CD4-positive, alpha-beta memory T cell (primary cell): ENCODE measurements at regions of chr6 and their contacts with region 1.

Region 1: DNA sequence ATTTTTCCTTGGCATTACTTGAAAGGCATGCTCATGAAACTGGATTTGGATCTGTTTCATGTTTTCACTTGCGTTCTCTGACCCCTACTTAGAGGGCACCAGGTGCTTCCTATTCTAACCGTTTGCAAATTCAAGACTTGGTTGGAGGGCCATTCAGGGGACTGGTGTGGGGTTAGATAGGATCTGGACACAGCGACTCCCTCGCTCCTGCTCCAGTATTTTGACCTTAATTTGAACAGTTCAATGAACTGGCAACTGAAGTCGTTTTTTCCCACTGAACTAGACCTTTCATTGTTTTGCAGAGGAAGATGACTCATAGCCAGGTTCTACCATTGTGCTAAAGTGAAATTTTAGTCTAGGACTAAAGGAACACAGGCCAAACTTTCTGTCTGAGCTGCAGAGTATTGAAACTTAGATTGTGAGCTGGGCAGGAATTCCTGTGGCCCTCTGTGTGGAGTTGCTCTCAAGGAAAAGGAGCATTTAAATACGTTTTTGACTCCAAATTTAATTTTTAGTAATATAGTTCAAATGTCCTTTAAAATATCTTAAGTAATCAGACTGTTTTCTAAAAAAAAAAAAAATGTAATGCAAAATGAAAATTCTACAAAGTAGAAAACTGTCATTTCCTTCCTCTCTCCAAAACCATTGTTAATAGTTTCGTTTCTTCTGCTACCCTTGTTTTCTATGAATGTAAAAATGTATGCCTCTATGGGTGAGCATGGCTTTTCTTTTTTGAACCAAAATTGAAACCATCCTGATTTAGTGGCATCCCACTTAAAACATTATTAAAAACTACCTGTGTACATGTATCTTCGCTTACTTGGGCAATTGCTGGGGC is 64.8 kb downstream of the UTRN start:
- DNase-seq: peak; percentile 42 to 49 (median 44)
- H3K4me3 ChIP-seq: peak overlapping the region; percentile 6 to 18
- H3K4me3 Mint-ChIP-seq: peak overlapping the region; percentile 75 to 90 (median 79)
- H3K27ac ChIP-seq: peak overlapping the region; percentile 61
- H3K27ac Mint-ChIP-seq: peak overlapping the region; percentile 81 to 96 (median 93)
- H3K4me1 ChIP-seq: peaks cover 98% of the 10 kb centered on the region
- H3K4me1 Mint-ChIP-seq: peaks cover 59 to 93% (median 80%) of the 10 kb centered on the region in 4 donors
- H3K27me3 ChIP-seq: no peaks in the 10 kb centered on the region
- H3K27me3 Mint-ChIP-seq: no peaks in the 10 kb centered on the region

Region 2: GRCh38 chr6:144284783-144285547 is 64.9 kb before region 1 on chr6 and contains the start of gene UTRN:
- CTCF ChIA-PET with region 1: interaction called, 4 read pairs
- POLR2A ChIA-PET with region 1: interaction called, 10 read pairs
- intact Hi-C with region 1: loop called (anchors 2 kb)
- DNase-seq: peak; percentile 18 to 40 (median 30)
- H3K4me3 ChIP-seq: peak within 1 kb of the TSS; percentile 65 to 89
- H3K4me3 Mint-ChIP-seq: peak within 1 kb of the TSS; percentile 88 to 98 (median 96)
- H3K27ac ChIP-seq: peak within 1 kb of the TSS; percentile 10
- H3K27ac Mint-ChIP-seq: peak within 1 kb of the TSS; percentile 53 to 86 (median 68)
- H3K4me1 ChIP-seq: peaks cover 20% of the 10 kb centered on the region
- H3K4me1 Mint-ChIP-seq: peaks cover 9 to 23% (median 18%) of the 10 kb centered on the region in 4 donors
- H3K27me3 ChIP-seq: no peaks in the 10 kb centered on the region
- H3K27me3 Mint-ChIP-seq: no peaks in the 10 kb centered on the region
- total RNA-seq, gene UTRN: 219 to 227 TPM

Region 3: GRCh38 chr6:144334131-144334708 is 15.7 kb before region 1 on chr6:
- CTCF ChIA-PET with region 1: no interaction called
- POLR2A ChIA-PET with region 1: interaction called, 49 read pairs
- intact Hi-C with region 1: loop called (anchors 2 kb)
- DNase-seq: peak; percentile 75 to 88 (median 78)
- H3K4me3 ChIP-seq: peak overlapping the region in 1 of 2 donors; percentile 58
- H3K4me3 Mint-ChIP-seq: peak overlapping the region; percentile 73 to 90 (median 85)
- H3K27ac ChIP-seq: peak overlapping the region; percentile 64
- H3K27ac Mint-ChIP-seq: peak overlapping the region; percentile 86 to 97 (median 96)
- H3K4me1 ChIP-seq: peaks cover 38% of the 10 kb centered on the region
- H3K4me1 Mint-ChIP-seq: peaks cover 44 to 62% (median 53%) of the 10 kb centered on the region in 4 donors
- H3K27me3 ChIP-seq: no peaks in the 10 kb centered on the region
- H3K27me3 Mint-ChIP-seq: no peaks in the 10 kb centered on the region

Region 4: DNA sequence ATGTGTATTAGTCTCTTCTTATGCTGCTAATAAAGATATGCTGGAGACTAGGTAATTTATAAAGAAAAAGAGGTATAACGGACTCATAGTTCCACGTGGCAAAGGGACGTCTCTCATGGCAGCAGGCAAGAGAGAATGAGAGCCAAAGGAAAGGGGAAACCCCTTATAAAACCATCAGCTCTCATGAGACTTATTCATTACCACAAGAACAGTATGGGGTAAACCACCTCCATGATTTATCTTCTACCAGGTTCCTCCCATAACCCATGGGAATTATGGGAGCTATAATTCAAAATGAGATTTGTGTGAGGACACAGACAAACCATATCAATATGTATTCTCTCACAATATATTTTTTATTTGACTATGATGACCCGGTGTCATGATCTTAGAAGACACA is 44.3 kb after region 1 on chr6:
- CTCF ChIA-PET with region 1: no interaction called
- POLR2A ChIA-PET with region 1: no interaction called
- intact Hi-C with region 1: loop called (anchors 5 kb)
- DNase-seq: no peak
- H3K4me3 ChIP-seq: no peak overlapping the region
- H3K4me3 Mint-ChIP-seq: no peak overlapping the region
- H3K27ac ChIP-seq: no peak overlapping the region
- H3K27ac Mint-ChIP-seq: peak overlapping the region in 1 of 7 donors; percentile 36
- H3K4me1 ChIP-seq: peaks cover 35% of the 10 kb centered on the region
- H3K4me1 Mint-ChIP-seq: peaks cover 34 to 74% (median 56%) of the 10 kb centered on the region in 4 donors
- H3K27me3 ChIP-seq: no peaks in the 10 kb centered on the region
- H3K27me3 Mint-ChIP-seq: no peaks in the 10 kb centered on the region

Region 5: GRCh38 chr6:144411332-144412190 is 61.7 kb after region 1 on chr6:
- CTCF ChIA-PET with region 1: no interaction called
- POLR2A ChIA-PET with region 1: interaction called, 6 read pairs
- intact Hi-C with region 1: loop called (anchors 5 kb)
- DNase-seq: peak in 2 of 5 donors; percentile 5 to 17
- H3K4me3 ChIP-seq: no peak overlapping the region
- H3K4me3 Mint-ChIP-seq: peak overlapping the region; percentile 39 to 97 (median 82)
- H3K27ac ChIP-seq: no peak overlapping the region
- H3K27ac Mint-ChIP-seq: peak overlapping the region; percentile 71 to 96 (median 84)
- H3K4me1 ChIP-seq: peaks cover 49% of the 10 kb centered on the region
- H3K4me1 Mint-ChIP-seq: peaks cover 53 to 84% (median 66%) of the 10 kb centered on the region in 4 donors
- H3K27me3 ChIP-seq: no peaks in the 10 kb centered on the region
- H3K27me3 Mint-ChIP-seq: no peaks in the 10 kb centered on the region